ENCODE measurements at regions of chr3 and their contacts with region 1.

Region 1: GRCh38 chr3:4978204-4978965 is 852 bp upstream of the BHLHE40 start:
- DNase-seq: peak; percentile 99
- H3K4me3 ChIP-seq: peak overlapping the region; percentile 71 to 94 (median 86)
- H3K27ac ChIP-seq: peak overlapping the region; percentile 95 to 99 (median 97)
- H3K4me1 ChIP-seq: peaks cover 38 to 55% (median 49%) of the 10 kb centered on the region in 4 donors
- H3K27me3 ChIP-seq: no peaks in the 10 kb centered on the region
- CTCF ChIP-seq: no peak
- EP300 ChIP-seq: peak; percentile 90
- POLR2A ChIP-seq: peak; percentile 63

Region 2: GRCh38 chr3:4722103-4722502 is 256.3 kb before region 1 on chr3:
- intact Hi-C with region 1: loop called (anchors 5 kb)
- DNase-seq: no peak
- H3K4me3 ChIP-seq: no peak overlapping the region
- H3K27ac ChIP-seq: peak overlapping the region; percentile 74 to 82 (median 78)
- H3K4me1 ChIP-seq: peaks cover 44 to 73% (median 66%) of the 10 kb centered on the region in 4 donors
- H3K27me3 ChIP-seq: no peaks in the 10 kb centered on the region
- CTCF ChIP-seq: peak; percentile 43 to 47 (median 44)
- EP300 ChIP-seq: no peak
- POLR2A ChIP-seq: no peak

Region 3: DNA sequence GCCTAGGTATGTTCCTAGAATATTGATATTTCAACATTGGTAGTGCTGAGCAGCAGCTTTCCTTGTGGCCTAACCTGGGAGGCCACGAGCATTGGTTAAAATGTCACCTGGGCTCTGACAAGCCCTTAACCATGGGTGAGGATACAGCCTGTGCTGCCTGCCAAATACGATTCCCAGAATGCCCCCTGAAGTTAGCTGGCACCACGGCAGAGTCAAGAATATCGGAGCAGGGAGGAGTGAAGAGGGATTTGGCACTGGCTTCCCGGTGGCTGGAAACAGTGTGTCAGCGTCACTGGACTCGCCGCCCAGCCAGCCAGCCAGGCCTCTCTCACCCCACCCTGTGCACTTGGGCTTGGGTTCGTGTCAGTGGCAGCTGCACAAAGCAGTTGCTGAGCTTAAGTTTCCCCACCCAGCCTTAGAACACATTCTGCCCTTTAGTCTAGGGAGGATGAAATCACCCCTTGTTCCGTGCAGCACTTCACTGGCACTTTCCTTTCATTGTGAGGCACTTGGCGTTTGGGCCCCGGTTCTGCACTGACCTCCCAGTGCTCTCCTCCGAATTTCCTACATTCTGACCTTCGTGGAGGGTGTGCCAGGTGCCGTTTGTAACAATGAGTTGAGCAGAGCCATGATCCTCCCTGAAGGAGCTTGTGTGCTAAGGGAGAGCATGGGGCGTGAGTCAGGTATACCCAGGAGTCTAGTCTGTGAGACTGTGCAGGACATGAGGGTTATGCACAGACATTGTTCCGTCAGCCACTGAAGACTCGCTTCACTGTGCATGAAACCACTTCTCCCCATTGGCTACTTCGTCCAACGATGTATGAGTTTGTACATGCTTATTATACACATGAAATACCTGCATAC is 151.9 kb before region 1 on chr3:
- intact Hi-C with region 1: loop called (anchors 5 kb)
- DNase-seq: no peak
- H3K4me3 ChIP-seq: no peak overlapping the region
- H3K27ac ChIP-seq: peak overlapping the region; percentile 74 to 82 (median 80)
- H3K4me1 ChIP-seq: peaks cover 56 to 71% (median 69%) of the 10 kb centered on the region in 4 donors
- H3K27me3 ChIP-seq: no peaks in the 10 kb centered on the region
- CTCF ChIP-seq: no peak
- EP300 ChIP-seq: no peak
- POLR2A ChIP-seq: peak; percentile 9

Measured in esophagus muscularis mucosa (tissue), 4 donors.